HAP-1 (cell line): ENCODE measurements at regions of chr16 and their contacts with region 1.

Region 1: DNA sequence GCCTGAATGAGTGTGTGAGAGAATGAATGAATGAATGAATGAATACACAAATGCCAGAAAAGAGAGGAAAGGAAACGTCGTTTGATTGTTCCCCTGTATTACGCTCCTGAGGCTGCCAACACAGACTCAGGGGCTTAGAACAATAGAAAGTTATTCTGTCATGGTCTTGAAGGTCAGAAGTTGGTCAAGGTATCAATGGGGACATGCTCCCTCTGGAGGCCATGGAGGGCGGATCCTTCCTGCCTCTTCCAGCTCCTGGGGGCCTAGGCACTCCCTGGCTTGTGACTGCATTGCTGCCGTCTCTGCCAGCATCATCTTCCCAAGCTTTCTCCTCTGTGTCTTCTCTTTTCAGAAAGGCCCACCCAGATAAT is 1.5 kb upstream of the SLC38A8 start:
- DNase-seq: peak; percentile 18 to 63
- H3K4me3 ChIP-seq: no peak overlapping the region
- H3K4me1 ChIP-seq: no peaks in the 10 kb centered on the region
- H3K27me3 ChIP-seq: 0 out of 2 replicates have a peak, but pooled peaks cover 3% of the 10 kb centered on the region

Region 2: DNA sequence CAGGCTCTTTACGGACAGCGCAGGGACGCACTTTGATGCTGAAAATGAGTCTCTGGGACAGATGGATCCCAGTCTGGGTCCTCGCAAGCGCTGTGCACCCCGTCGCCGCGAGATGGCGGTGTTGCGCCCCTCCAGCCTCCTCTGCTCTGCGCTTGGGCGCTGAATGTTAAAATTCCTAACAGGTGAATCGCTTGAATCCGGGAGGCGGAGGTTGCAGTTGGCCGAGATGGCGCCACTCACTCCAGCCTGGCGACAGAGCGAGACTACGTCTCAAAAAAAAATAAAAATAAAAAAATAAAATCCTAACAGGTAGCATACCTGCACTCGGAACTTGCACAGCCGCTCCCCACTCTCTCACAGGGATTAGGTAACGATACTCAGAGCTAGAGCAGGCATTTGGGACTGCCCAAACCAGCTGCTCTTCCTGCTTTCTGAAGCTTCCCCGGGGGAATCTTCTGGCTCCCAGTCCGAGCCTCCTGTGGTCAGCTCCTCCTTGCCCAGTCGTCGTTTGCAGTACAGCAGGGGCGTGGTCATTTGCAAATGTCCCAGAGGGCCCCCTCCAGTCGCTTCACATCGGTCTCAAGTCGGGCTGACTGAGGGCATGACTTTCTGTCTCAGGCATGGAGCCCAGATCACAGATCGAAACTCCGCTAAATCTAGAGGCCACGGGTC is 117.2 kb before region 1 on chr16:
- in situ Hi-C with region 1: no loop called
- DNase-seq: peak; percentile 46 to 88
- H3K4me3 ChIP-seq: no peak overlapping the region
- H3K4me1 ChIP-seq: peaks cover 8% of the 10 kb centered on the region
- H3K27me3 ChIP-seq: no peaks in the 10 kb centered on the region

Region 3: DNA sequence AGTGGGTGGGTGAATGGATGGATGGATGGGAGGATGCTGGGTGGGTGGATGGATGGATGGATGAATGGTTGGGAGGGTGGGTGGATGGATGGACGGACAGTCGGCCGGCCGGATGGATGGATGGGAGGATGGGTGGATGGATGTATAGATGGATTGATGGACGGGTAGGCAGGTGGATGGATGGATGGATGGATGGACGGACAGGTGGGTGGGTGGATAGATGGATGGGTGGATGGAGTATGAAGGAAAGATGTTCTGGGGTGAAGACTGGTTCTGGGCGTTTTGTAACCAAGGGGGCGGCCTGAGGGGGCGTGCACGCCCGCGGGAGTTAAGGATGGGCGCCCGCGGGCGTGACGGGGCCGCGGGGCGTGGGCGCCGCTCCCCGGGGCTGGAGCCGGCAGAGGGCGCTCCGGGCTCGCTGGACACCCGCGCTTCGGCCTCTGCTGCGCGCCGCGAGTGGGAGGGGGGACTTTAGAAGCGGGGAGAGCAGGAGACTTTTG is 76.2 kb before region 1 on chr16 and contains the start of gene NECAB2:
- in situ Hi-C with region 1: loop called (anchors 10 kb)
- DNase-seq: peak in 1 of 2 experiments; percentile 76
- H3K4me3 ChIP-seq: peak within 1 kb of the TSS; percentile 16
- H3K4me1 ChIP-seq: no peaks in the 10 kb centered on the region
- H3K27me3 ChIP-seq: no peaks in the 10 kb centered on the region

Region 4: GRCh38 chr16:83994087-83994486 is 50.0 kb before region 1 on chr16:
- in situ Hi-C with region 1: no loop called
- DNase-seq: no peak
- H3K4me3 ChIP-seq: no peak overlapping the region
- H3K4me1 ChIP-seq: peaks cover 5% of the 10 kb centered on the region
- H3K27me3 ChIP-seq: no peaks in the 10 kb centered on the region

Region 5: DNA sequence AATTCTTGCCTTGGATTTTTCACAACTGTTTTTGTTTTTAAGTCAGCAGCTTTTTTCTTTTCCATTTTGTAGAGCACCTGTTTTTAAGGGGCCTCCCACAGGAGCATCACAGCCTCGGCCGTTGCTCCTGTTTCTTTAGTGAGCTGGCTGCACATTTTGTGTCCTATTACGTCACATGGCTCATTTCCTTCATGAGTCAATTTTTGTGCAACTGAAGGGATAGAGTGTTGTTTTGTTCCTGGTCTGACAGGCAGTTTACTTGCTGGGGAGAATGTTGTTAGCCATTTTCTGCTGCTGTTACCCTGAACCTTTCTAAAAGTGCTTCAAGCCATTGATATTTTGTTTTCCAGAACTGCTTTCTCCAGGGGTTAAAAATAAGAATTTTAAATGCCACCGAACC is 730.7 kb after region 1 on chr16:
- in situ Hi-C with region 1: no loop called
- DNase-seq: peak in 1 of 2 experiments; percentile 0
- H3K4me3 ChIP-seq: no peak overlapping the region
- H3K4me1 ChIP-seq: no peaks in the 10 kb centered on the region
- H3K27me3 ChIP-seq: no peaks in the 10 kb centered on the region